ENCODE measurements at regions of chr5 and their contacts with region 1.

Region 1: DNA sequence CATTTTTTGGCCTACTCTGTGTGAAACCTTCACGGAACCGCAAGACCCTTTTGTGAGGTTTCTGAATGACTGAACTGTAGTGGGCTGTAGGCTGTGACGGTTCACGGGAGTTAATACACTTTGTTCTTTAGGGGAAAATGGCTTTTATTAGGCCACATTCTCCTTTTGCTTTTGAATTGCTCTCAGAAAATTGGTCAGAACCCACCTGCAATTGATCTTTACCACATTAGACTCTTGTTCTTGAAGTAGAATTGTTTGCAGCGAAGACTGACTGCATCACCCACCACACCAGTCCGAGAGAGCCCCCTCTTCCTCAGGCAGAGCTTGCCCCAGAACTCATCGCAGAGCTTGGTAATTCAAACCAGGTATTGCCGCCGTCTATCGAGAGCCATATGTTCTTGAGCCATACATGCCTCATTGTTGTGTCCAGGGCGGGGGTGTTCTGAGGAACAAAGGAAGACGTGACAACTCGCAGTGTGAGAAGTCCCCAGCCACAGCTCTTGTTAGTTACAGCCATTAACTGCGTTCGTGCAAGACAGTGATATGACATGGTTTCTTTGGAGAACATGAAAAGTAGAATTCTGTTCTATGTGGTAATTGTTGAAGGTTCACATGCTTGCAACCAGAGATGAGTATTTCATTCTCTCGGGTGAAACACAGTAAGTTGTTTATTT is 166.4 kb upstream of the OTULINL start:
- DNase-seq: peak; percentile 65
- H3K4me3 Mint-ChIP-seq: peak overlapping the region; percentile 67
- H3K27ac Mint-ChIP-seq: peak overlapping the region; percentile 94
- H3K4me1 Mint-ChIP-seq: peaks cover 52% of the 10 kb centered on the region
- H3K27me3 Mint-ChIP-seq: peaks cover 18% of the 10 kb centered on the region

Region 2: DNA sequence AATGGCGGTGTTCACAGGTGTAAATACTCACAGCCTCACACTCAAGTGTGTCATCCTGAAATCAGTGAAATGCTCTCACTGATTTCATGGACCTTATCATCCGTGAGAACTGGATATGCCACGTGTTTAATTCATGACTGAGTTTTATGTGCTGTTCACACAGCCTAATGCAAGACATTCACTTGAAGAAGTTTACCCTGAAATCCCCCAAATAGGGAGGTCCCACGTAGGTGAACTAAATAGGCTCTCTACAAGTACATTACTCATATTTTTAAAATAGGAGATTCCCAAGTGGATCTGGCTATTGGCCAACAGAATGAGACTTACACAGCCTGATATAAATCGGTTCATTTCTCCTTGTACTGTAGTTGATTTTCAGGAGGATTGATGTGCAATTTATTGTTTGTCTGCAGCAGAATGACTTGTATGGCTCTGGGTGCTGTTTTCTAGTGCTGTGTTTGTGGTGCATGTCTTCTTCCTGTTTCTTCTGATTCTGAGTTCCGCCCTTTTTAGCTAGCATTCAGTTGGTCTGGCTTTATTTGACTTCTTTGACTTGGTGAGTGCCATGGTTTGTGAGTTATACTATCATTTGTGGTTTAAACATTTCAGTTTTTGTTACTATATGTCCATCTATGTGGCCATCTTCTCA is 246.9 kb before region 1 on chr5:
- CTCF ChIA-PET with region 1: no interaction called
- POLR2A ChIA-PET with region 1: no interaction called
- intact Hi-C with region 1: no loop called
- DNase-seq: no peak
- H3K4me3 Mint-ChIP-seq: no peak overlapping the region
- H3K27ac Mint-ChIP-seq: no peak overlapping the region
- H3K4me1 Mint-ChIP-seq: peaks cover 2% of the 10 kb centered on the region
- H3K27me3 Mint-ChIP-seq: peaks cover 12% of the 10 kb centered on the region

Region 3: DNA sequence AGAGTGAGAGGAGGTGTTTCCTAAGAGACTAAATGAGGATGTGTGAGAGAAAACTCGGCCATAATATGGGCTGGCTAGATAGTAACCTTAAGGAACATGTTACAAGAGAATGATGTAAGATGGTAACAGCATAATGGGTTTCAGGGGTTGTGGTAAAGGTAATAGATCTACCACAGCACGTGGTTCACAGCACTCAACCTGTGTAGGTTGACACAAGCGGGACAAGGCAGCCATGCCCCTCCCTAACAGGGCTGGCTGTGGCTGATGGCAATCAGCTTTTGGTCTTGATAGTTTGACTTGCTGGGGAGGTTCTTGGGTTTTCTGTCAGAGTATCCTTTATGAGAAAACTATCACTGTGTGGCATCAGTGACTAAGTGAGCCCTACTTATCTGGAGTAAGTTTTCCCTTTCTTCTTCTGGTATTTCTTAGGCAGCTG is 133.4 kb before region 1 on chr5:
- CTCF ChIA-PET with region 1: no interaction called
- POLR2A ChIA-PET with region 1: no interaction called
- intact Hi-C with region 1: no loop called
- DNase-seq: peak; percentile 17
- H3K4me3 Mint-ChIP-seq: no peak overlapping the region
- H3K27ac Mint-ChIP-seq: no peak overlapping the region
- H3K4me1 Mint-ChIP-seq: peaks cover 2% of the 10 kb centered on the region
- H3K27me3 Mint-ChIP-seq: peaks cover 7% of the 10 kb centered on the region

Region 4: DNA sequence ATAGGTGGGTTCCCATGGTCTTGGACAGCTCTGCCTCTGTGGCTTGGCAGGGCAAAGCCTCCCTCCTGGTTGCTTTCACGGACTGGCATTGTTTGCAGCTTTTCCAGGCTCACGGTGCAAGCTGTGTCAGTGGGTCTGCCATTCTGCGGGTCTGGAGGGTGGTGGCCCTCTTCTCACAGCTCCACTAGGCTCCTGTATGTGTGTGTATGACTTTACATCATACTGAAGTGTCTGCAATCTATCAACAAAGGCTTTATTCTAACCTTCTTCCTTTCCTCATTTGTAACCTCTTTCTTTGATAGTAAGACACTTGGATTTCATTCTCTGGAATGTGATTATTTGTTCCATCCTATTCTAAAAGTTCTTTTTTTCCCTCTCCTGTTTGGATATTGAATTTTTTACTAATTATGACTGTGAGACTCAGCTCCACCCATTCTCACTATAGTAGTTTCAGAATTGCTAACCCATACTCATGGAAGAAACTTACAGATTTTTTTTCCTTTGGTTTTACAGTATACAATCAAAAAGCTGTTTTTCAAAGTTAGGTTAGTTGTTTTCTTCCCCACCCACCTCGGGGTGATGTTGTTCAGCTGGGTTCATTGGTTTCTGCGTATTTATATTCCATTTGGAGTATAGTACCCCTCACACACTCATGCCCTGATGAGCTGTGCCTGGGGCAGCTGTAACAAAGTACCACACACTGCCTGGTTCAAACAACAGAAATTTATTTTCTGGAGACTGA is 21.8 kb after region 1 on chr5:
- CTCF ChIA-PET with region 1: interaction called, 3 read pairs
- POLR2A ChIA-PET with region 1: interaction called, 3 read pairs
- intact Hi-C with region 1: loop called (anchors 1 kb)
- DNase-seq: no peak
- H3K4me3 Mint-ChIP-seq: no peak overlapping the region
- H3K27ac Mint-ChIP-seq: no peak overlapping the region
- H3K4me1 Mint-ChIP-seq: peaks cover 26% of the 10 kb centered on the region
- H3K27me3 Mint-ChIP-seq: peaks cover 12% of the 10 kb centered on the region

Region 5: DNA sequence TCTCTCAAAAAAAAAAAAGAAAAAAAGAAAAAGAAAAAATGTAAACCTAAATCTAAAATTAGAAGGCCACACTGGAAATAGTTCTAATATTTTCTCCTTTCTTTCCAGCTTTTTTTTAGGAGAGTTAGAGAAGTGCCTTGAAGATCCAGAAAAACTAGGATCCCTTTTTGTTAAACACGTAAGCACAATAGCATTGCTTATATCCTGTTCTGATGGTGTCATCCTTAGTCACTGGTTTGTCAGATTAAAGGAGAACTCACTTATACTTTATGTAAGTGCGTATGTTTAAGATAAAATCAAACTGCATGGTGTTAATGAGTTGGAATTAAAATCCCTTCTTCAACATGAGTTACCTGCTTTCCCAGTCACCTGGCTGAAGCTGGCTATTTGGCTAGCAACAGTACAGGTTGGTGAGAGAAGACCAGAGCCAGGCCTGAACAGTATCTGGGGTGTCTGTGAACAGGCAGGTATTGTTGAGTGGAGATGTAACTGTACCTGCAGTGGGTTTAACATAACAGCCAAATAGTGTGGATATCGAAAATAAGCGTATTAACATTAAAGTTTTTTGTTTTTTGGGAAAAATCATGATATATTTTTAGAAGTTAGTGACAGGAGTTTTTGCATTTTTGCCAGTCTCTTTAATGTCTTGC is 61.8 kb after region 1 on chr5:
- CTCF ChIA-PET with region 1: interaction called, 3 read pairs
- POLR2A ChIA-PET with region 1: no interaction called
- intact Hi-C with region 1: loop called (anchors 1 kb)
- DNase-seq: no peak
- H3K4me3 Mint-ChIP-seq: no peak overlapping the region
- H3K27ac Mint-ChIP-seq: no peak overlapping the region
- H3K4me1 Mint-ChIP-seq: peaks cover 10% of the 10 kb centered on the region
- H3K27me3 Mint-ChIP-seq: peaks cover 2% of the 10 kb centered on the region

Region 6: DNA sequence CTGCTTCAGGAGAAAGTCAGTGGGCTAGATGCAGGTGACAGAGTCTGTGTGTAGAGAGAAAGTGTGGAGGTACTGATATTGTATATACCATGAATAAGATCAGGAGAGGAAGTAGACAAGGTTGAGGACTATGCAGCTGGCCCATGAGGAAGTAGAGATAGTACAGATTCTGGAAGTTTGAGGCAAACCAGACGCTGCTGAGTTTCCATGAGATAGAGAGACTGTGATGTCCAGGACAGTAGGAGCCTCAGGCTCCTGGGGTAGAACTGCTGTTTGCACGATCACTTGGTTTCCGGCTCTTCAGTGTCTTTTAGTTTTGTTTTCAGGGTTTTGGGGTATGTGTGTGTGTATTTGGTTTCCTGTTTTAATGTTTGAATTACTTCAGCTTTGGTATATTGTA is 180.0 kb after region 1 on chr5:
- CTCF ChIA-PET with region 1: no interaction called
- POLR2A ChIA-PET with region 1: interaction called, 3 read pairs
- intact Hi-C with region 1: loop called (anchors 1 kb)
- DNase-seq: peak; percentile 50
- H3K4me3 Mint-ChIP-seq: peak overlapping the region; percentile 63
- H3K27ac Mint-ChIP-seq: peak overlapping the region; percentile 70
- H3K4me1 Mint-ChIP-seq: peaks cover 84% of the 10 kb centered on the region
- H3K27me3 Mint-ChIP-seq: no peaks in the 10 kb centered on the region

Region 7: DNA sequence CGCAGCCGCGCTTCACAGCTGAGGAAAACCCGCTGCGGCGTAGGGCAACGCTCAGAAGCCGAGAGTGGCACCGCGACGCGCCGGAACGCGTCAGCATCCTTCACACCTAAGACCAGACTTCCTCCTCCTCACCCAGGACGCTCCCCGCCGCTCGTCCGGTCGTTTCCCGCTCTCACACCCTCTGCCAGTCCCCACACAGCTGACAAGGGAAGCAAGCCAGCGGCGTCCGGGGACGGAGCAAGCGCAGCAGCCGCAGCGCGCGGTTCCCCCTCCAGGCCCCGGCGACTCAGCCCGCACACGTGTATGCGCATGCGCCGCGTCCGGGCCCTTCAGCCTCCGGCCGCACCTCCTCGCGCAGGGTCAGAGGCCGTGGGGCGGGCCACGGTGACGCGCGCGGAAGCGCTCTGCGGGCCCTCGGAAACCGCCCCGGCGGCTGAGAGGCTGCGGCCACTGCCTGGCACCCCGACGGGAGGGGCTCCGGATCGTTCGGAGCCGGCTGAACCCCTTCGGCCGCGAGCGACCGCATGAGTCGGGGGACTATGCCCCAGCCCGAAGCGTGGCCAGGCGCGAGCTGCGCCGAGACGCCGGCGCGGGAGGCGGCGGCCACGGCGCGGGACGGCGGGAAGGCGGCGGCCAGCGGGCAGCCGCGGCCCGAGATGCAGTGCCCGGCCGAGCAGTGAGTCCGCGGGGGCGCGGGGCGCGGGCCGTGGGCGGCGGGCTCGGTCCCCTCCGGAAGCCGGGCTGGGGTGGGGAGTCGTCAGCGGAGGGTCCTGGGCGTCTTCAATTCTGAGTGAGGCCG is 249.3 kb after region 1 on chr5 and contains the start of gene OTULIN:
- CTCF ChIA-PET with region 1: no interaction called
- POLR2A ChIA-PET with region 1: interaction called, 10 read pairs
- intact Hi-C with region 1: loop called (anchors 2 kb)
- DNase-seq: peak; percentile 94
- H3K4me3 Mint-ChIP-seq: peak within 1 kb of the TSS; percentile 92
- H3K27ac Mint-ChIP-seq: peak within 1 kb of the TSS; percentile 95
- H3K4me1 Mint-ChIP-seq: peaks cover 54% of the 10 kb centered on the region
- H3K27me3 Mint-ChIP-seq: no peaks in the 10 kb centered on the region
- total RNA-seq, gene OTULIN: 53.3 to 53.6 TPM

Region 8: GRCh38 chr5:14925326-14925725 is 510.2 kb after region 1 on chr5:
- CTCF ChIA-PET with region 1: no interaction called
- POLR2A ChIA-PET with region 1: no interaction called
- intact Hi-C with region 1: loop called (anchors 10 kb)
- DNase-seq: no peak
- H3K4me3 Mint-ChIP-seq: peak overlapping the region; percentile 35
- H3K27ac Mint-ChIP-seq: peak overlapping the region; percentile 91
- H3K4me1 Mint-ChIP-seq: peaks cover 54% of the 10 kb centered on the region
- H3K27me3 Mint-ChIP-seq: no peaks in the 10 kb centered on the region

Measured in activated CD4-positive, alpha-beta memory T cell treated with anti-CD3 and anti-CD28 coated beads for 36 hours (primary cell).